CD14-positive monocyte (primary cell): ENCODE measurements at regions of chr17 and their contacts with region 1.

Region 1: GRCh38 chr17:49779739-49780231 is 8.7 kb upstream of the KAT7 start:
- DNase-seq: peak; percentile 47 to 71 (median 48)
- H3K4me3 ChIP-seq: no peak overlapping the region
- H3K4me3 Mint-ChIP-seq: no peak overlapping the region
- H3K27ac ChIP-seq: peak overlapping the region in 1 of 2 donors; percentile 34
- H3K27ac Mint-ChIP-seq: peak overlapping the region in 2 of 7 donors; percentile 12 to 54
- H3K4me1 ChIP-seq: peaks cover 2 to 18% of the 10 kb centered on the region in 2 donors
- H3K4me1 Mint-ChIP-seq: peaks cover 21% of the 10 kb centered on the region
- H3K27me3 ChIP-seq: no peaks in the 10 kb centered on the region
- H3K27me3 Mint-ChIP-seq: peaks cover 0 to 5% (median 0%) of the 10 kb centered on the region in 3 donors
- CTCF ChIP-seq: peak; percentile 75

Region 2: DNA sequence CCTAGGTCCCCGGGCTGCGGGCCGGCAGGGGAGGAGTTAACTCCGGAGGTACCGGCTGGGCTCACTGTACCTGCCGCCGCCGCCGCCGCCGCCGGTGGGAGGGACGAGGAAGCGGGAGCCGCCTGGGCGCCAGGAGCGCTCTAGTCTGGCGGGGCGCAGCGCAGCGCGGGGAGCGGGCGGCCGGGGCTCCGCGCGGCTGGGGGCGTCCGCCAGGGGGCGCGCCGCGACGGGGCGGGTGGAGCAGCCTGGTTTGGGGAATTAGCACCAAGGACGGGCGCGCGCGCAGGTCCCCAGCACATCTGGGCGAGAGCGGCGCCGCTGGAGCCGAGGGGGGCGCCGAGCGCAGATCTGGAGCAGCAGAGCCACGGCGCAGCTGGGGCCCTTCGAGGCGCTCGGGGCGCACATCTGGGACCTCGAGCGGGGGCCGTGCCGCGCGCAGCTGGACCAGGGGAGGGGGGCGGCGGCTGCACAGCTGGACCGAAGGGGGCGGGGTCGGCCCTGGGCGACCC is 204.2 kb before region 1 on chr17 and contains the start of gene NXPH3:
- intact Hi-C with region 1: loop called in 1 of 2 experiments (anchors 5 kb)
- DNase-seq: peak; percentile 28 to 53 (median 33)
- H3K4me3 ChIP-seq: peak within 1 kb of the TSS in 1 of 3 experiments; percentile 68
- H3K4me3 Mint-ChIP-seq: peak within 1 kb of the TSS; percentile 63 to 89
- H3K27ac ChIP-seq: no peak within 1 kb of the TSS
- H3K27ac Mint-ChIP-seq: no peak within 1 kb of the TSS
- H3K4me1 ChIP-seq: peaks cover 10 to 19% of the 10 kb centered on the region in 2 donors
- H3K4me1 Mint-ChIP-seq: peaks cover 11% of the 10 kb centered on the region
- H3K27me3 ChIP-seq: peaks cover 16 to 72% of the 10 kb centered on the region in 2 donors
- H3K27me3 Mint-ChIP-seq: peaks cover 64 to 83% (median 70%) of the 10 kb centered on the region in 3 donors
- CTCF ChIP-seq: peak; percentile 60
- polyA plus RNA-seq, gene NXPH3: not detected